OCI-LY7 (cell line): ENCODE measurements at regions of chr3 and their contacts with region 1.

Region 1: GRCh38 chr3:4493014-4493940 is at the start of gene ITPR1:
- DNase-seq: peak; percentile 99
- H3K4me3 ChIP-seq: peak within 1 kb of the TSS; percentile 91
- H3K27ac ChIP-seq: peak within 1 kb of the TSS; percentile 71
- H3K4me1 ChIP-seq: peaks cover 35% of the 10 kb centered on the region
- CTCF ChIP-seq: no peak
- total RNA-seq, gene ITPR1: 84.4 and 87.4 TPM in 2 replicates

Region 2: DNA sequence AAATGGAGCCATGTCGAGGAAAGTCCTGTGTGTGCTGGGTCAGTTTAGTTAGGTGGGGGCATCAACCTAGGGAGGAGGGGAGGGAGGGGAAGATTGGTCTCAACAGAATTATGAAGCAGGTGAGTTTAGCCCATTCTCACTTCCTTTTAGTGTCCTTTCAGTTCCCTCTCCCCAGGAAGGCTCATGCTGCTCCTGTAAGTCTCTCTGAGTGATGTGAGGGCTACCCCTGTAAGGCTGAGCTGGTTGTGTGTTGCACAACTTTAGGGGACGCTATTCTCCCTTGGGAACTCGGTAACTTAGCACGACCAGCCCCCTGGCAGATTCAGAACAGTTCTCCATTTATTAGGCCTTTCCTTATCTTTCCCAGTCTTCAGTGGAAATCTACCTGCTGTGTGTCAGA is 1404.3 kb before region 1 on chr3:
- CTCF ChIA-PET with region 1: interaction called, 13 read pairs
- POLR2A ChIA-PET with region 1: no interaction called
- intact Hi-C with region 1: no loop called
- DNase-seq: peak; percentile 79
- H3K4me3 ChIP-seq: no peak overlapping the region
- H3K27ac ChIP-seq: no peak overlapping the region
- H3K4me1 ChIP-seq: peaks cover 29% of the 10 kb centered on the region
- CTCF ChIP-seq: peak; percentile 67

Region 3: GRCh38 chr3:4466741-4467521 is 26.3 kb before region 1 on chr3 and contains the start of gene SUMF1:
- CTCF ChIA-PET with region 1: interaction called, 5 read pairs
- POLR2A ChIA-PET with region 1: interaction called, 7 read pairs
- intact Hi-C with region 1: loop called (anchors 1 kb)
- DNase-seq: peak; percentile 85
- H3K4me3 ChIP-seq: peak within 1 kb of the TSS; percentile 80
- H3K27ac ChIP-seq: peak within 1 kb of the TSS; percentile 19
- H3K4me1 ChIP-seq: peaks cover 11% of the 10 kb centered on the region
- CTCF ChIP-seq: no peak
- total RNA-seq, gene SUMF1: 11.9 and 12.8 TPM in 2 replicates

Region 4: DNA sequence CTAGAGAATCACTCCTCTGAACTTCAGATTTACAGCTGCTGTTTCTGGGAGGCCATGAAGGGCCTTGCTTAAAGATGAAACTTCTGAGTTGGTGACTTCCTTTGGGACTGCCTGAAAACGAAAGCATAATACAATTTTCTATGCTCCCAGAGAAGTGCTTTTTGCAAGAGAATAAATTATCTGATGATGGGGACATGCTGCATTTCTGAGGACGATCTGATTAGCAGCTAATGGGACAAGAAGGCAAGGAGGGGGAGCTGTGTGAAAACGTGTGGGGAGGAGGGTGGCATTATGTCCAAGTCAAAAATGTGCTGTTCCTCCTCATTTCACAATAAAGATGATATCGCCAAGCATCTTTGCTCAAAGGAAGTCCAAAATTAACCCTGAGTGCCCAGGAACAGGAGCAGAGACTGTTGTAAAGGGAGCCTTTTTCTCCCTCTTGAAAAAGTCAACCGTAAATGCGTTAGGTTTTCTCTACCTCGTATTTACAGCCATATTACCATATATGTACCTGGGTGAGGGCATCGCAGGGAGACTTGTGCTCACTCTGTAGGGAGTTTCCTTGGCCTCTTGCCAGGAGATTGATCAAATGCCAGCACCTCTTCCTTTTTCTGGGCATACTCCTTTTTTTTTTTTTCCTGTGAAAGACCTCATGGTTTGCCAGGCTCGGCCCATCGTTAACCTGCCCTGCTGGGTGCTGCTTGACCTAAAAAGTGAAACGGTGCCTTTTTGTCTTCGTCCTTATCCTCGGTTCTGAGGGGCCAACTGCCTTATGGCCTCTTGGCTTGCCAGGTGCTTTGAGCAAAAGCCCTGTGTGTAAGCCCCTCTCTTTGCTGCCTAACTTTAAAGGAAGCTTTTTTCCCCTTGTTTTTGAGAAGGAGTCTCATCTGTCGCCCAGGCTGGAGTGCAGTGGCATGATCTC is 11.3 kb after region 1 on chr3:
- CTCF ChIA-PET with region 1: interaction called, 10 read pairs
- POLR2A ChIA-PET with region 1: interaction called, 206 read pairs
- intact Hi-C with region 1: loop called (anchors 1 kb)
- DNase-seq: peak; percentile 59
- H3K4me3 ChIP-seq: peak overlapping the region; percentile 64
- H3K27ac ChIP-seq: peak overlapping the region; percentile 98
- H3K4me1 ChIP-seq: peaks cover 83% of the 10 kb centered on the region
- CTCF ChIP-seq: no peak

Region 5: DNA sequence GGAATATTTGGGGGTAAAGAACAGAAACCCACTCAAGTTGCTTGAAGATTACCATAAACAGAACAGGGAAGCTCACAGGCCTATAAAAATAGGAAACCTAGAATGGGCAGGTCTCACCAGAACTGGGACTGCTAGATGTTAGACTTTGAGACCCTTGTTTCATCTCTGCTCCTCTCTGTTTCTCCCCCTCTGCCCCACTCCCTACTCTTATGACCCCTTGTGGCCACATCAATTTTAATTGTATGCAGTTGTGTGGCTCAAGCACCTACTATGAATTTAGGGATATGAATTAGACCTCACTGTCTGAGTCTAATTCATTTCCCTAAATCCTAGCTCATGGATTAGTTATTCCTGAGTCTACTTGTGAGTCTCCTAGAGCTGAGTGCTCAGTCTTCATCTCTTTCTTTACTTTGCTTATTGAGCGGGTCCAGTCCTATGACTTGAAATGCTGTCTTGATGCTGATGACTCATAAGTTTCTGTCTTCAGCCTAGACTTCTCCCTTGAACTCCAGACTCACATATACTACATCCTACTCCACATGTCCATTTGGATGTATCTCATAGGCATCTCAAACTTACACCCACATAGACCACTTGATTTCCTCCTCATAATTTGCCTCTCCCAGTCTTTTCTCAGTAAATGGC is 78.5 kb after region 1 on chr3:
- CTCF ChIA-PET with region 1: no interaction called
- POLR2A ChIA-PET with region 1: interaction called, 5 read pairs
- intact Hi-C with region 1: loop called (anchors 5 kb)
- DNase-seq: peak; percentile 45
- H3K4me3 ChIP-seq: no peak overlapping the region
- H3K27ac ChIP-seq: no peak overlapping the region
- H3K4me1 ChIP-seq: no peaks in the 10 kb centered on the region
- CTCF ChIP-seq: peak; percentile 75

Region 6: GRCh38 chr3:4633078-4634004 is 140.1 kb after region 1 on chr3:
- CTCF ChIA-PET with region 1: no interaction called
- POLR2A ChIA-PET with region 1: interaction called, 4 read pairs
- intact Hi-C with region 1: loop called (anchors 2 kb)
- DNase-seq: peak; percentile 57
- H3K4me3 ChIP-seq: no peak overlapping the region
- H3K27ac ChIP-seq: no peak overlapping the region
- H3K4me1 ChIP-seq: no peaks in the 10 kb centered on the region
- CTCF ChIP-seq: peak; percentile 98

Region 7: GRCh38 chr3:5155241-5155640 is 662.0 kb after region 1 on chr3:
- CTCF ChIA-PET with region 1: no interaction called
- POLR2A ChIA-PET with region 1: no interaction called
- intact Hi-C with region 1: no loop called
- DNase-seq: no peak
- H3K4me3 ChIP-seq: no peak overlapping the region
- H3K27ac ChIP-seq: no peak overlapping the region
- H3K4me1 ChIP-seq: peaks cover 10% of the 10 kb centered on the region
- CTCF ChIP-seq: no peak